ENCODE measurements at regions of chr5 and their contacts with region 1.

Region 1: DNA sequence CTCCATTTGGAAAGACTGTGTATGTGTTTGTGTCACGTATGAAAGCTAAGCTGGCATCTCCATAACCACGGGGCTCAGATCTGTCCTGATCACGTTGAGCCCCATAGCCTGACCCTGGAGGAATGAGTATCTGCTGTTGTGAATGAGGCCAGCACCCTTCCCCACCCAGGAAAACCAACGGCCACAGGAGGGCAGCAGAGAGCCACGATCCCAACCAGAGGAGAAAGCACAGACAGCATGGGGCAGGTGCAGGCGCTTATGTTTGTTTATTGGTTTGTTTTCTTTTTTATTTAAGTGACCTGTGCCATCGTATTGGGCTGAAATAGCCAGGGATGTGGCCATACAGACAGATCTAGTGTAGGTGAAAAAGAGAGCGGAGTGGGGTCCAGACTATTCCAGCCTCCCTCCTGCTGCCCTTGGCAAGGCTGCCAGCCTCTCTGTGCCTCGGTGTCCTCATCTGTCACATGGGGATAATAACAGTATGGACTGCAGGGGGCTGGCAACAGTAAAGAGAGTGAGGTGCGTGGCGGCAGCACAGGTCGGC is 12.0 kb downstream of the OR2V2 start:
- DNase-seq: peak; percentile 82
- H3K4me3 Mint-ChIP-seq: peak overlapping the region; percentile 71
- H3K27ac Mint-ChIP-seq: peak overlapping the region; percentile 95
- H3K4me1 Mint-ChIP-seq: peaks cover 27% of the 10 kb centered on the region
- H3K27me3 Mint-ChIP-seq: peaks cover 4% of the 10 kb centered on the region

Region 2: GRCh38 chr5:180784497-180785097 is 374.8 kb before region 1 on chr5:
- intact Hi-C with region 1: loop called (anchors 1 kb)
- DNase-seq: peak; percentile 47
- H3K4me3 Mint-ChIP-seq: no peak overlapping the region
- H3K27ac Mint-ChIP-seq: no peak overlapping the region
- H3K4me1 Mint-ChIP-seq: peaks cover 15% of the 10 kb centered on the region
- H3K27me3 Mint-ChIP-seq: no peaks in the 10 kb centered on the region

Region 3: DNA sequence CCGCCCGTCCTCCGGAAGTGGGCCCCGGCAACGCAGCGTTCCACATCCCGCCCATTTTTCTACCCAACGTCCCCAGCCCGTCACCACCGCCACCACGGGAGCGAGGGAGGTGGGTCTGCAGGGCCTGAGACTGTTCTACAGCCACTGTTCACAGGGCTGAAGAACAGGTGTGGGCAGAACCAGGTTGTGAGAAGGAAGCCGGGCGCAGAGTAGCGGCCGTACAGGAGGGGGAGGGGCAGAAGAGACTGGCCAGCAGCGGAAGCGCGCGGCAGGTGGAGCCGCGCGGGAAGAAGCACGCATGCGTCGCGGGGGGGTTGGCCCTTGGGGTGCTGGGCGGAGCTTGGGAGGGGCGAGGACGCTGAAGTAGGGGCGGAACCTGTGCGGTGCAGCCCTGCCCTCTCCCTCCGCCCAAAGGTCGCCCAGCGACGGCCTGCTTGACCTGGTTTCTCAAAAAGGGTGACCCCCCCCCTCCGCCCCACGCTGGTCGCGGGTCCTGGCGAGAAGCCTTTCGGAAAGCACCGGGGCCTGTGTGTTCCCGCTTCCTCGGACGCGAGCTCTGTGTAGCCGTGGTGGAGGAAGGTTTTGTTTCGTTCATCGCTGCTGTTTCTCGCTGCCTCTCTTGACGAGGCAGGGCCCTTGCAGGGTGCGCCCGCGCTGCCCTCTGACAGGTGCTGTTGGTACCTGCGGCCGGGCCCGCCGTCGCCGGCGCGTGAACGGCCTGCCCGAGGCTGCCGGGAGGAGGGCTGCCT is 349.0 kb before region 1 on chr5:
- intact Hi-C with region 1: loop called (anchors 1 kb)
- DNase-seq: peak; percentile 91
- H3K4me3 Mint-ChIP-seq: peak overlapping the region; percentile 84
- H3K27ac Mint-ChIP-seq: peak overlapping the region; percentile 99
- H3K4me1 Mint-ChIP-seq: peaks cover 78% of the 10 kb centered on the region
- H3K27me3 Mint-ChIP-seq: peaks cover 2% of the 10 kb centered on the region

Region 4: DNA sequence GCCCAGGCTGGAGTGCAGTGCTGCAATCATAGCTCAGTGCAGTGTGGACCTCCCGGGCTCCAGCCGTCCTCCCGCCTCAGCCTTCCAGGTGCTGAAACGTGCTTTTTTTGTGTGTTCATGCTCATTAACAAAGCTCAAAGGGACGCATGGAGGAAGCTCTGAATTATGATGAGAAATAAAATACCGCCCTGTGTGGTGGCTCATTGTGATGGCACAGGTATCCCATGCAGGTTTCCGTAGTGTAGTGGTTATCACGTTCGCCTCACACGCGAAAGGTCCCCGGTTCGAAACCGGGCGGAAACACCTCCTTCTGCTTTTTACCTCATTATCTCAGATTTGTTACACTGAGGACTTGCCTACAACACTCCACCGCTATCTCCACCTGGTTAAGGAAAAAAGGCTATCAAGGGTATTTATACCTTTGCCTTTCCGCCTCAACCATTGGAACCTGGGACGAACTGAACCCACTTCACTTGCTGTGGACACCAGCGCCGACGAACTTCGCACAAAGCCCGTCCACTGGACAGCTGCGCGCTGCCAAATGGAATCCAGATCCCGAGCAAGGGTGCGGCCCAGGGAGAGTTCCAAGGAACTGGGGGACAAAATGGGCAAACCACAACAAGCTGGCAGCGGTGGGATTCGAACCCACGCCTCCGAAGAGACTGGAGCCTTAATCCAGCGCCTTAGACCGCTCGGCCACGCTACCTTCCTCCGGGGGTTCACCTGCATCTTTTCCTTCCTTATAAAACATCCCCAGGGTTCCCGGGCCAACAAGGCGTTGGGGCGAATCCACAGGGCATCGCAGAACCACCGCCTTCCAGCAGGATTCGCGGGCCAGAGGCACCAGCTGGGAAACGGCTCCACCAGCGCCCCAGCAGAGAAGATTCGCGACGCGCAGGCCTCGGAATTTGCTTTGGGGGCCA is 14.3 kb after region 1 on chr5:
- intact Hi-C with region 1: loop called (anchors 1 kb)
- DNase-seq: peak; percentile 44
- H3K4me3 Mint-ChIP-seq: peak overlapping the region; percentile 86
- H3K27ac Mint-ChIP-seq: peak overlapping the region; percentile 87
- H3K4me1 Mint-ChIP-seq: peaks cover 40% of the 10 kb centered on the region
- H3K27me3 Mint-ChIP-seq: peaks cover 42% of the 10 kb centered on the region

Region 5: DNA sequence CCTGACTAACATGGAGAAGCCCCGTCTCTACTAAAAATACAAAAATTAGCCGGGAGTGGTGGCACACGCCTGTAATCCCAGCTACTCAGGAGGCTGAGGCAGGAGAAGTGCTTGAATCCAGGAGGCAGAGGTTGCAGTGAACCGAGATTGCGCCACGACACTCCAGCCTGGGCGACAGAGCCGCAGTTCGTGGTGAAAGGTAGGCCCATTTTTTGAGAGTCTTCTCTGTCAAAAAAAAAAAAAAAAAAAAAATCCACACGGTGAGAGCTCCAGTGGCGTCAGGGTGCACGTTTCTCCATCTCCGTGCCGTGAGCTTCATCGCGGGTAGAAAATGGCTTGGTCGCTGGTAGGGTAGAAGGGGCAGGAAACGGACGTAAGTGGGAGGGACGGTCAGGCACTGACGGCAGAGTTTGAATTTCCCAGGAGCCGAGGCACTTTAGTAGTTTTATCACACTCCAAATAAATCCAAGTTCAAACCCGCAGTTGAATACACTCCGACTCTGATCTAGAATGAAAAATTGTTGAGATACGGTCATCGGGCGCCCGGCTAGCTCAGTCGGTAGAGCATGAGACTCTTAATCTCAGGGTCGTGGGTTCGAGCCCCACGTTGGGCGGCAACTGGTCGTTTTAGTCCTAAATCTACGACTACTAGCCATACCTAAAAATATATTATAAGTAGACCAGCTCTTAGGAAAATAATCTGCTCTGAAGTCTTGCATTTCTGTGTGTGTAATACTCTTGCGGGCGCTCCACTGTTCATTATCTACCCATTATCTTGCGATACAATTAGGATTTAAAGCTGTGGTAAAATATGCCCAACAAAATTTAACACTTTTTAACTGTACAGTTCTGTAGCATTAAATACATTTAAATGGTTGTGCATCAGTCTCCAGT is 48.1 kb after region 1 on chr5:
- intact Hi-C with region 1: loop called (anchors 2 kb)
- DNase-seq: peak; percentile 59
- H3K4me3 Mint-ChIP-seq: peak overlapping the region; percentile 89
- H3K27ac Mint-ChIP-seq: peak overlapping the region; percentile 95
- H3K4me1 Mint-ChIP-seq: peaks cover 34% of the 10 kb centered on the region
- H3K27me3 Mint-ChIP-seq: peaks cover 28% of the 10 kb centered on the region

Region 6: GRCh38 chr5:181234455-181235306 is 75.3 kb after region 1 on chr5:
- intact Hi-C with region 1: no loop called
- DNase-seq: no peak
- H3K4me3 Mint-ChIP-seq: no peak overlapping the region
- H3K27ac Mint-ChIP-seq: peak overlapping the region; percentile 61
- H3K4me1 Mint-ChIP-seq: peaks cover 26% of the 10 kb centered on the region
- H3K27me3 Mint-ChIP-seq: no peaks in the 10 kb centered on the region

Region 7: DNA sequence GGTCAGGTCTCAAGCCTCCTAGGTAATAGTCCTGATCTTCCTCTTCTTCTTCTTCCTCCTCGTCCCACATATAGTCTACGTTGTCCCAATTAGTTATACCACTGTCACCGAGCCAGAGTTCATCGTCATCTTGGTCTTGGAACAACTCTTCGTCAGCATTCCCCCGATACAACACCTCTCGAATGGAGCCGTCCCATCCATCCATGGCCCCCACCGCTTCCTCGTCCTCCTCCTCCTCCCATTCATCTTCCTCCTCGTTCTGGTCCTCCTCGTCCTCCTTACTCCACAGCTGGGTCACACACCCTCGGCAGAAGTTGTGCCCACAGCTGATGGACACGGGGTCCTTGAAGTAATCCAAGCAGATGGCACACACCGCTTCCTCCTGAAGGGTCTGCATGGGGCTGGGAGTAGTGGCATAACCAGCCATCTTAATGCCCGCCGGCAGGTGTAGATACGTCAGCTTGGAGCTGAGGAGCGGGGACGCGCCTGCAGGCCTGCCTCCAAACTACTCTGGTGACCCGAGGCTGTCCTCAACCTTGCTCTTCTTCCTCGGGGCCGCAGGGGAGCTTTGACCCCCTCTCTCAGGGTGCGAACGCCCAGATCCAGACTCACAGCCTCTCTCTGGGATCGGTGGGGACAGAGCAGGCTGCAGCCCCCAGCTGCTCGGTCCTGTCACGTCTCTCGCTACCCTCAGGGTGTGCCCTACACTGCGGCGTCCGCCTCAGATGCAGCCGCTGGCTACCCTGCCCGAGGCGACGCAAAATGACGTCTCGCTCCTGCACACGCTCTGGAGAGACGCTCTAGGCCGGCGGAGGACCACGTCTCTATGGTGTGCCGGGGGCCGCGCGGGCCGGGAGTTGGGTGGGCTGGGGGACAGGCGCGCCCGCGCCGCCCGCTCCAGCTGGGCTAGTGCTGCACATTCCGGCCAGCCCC is 101.3 kb after region 1 on chr5 and contains the start of gene TRIM52:
- intact Hi-C with region 1: loop called (anchors 1 kb)
- DNase-seq: peak; percentile 87
- H3K4me3 Mint-ChIP-seq: peak within 1 kb of the TSS; percentile 99
- H3K27ac Mint-ChIP-seq: peak within 1 kb of the TSS; percentile 96
- H3K4me1 Mint-ChIP-seq: peaks cover 45% of the 10 kb centered on the region
- H3K27me3 Mint-ChIP-seq: no peaks in the 10 kb centered on the region
- total RNA-seq, gene TRIM52: 15.3 and 17.1 TPM in 2 replicates

Measured in activated T-helper 1 cell treated with anti-CD3 and anti-CD28 coated beads, Interleukin-12 subunit alpha, Interleukin-12 subunit beta, Interleukin-2, Interleukin-4 antibody, amounts not matched to agents 30 ng/mL and 10 ng/mL and 1 ng/mL, durations not matched to agents 14 hours and 24 hours and 36 hours (primary cell).